Spleen (tissue), 13 donors: ENCODE measurements at regions of chr1 and their contacts with region 1.

Region 1: GRCh38 chr1:8015036-8015808 is 10.9 kb downstream of the ERRFI1 start:
- DNase-seq: no peak
- H3K4me3 ChIP-seq: no peak overlapping the region
- H3K27ac ChIP-seq: peak overlapping the region in 3 of 8 donors; percentile 9 to 11 (median 11)
- H3K4me1 ChIP-seq: peaks cover 3 to 31% (median 10%) of the 10 kb centered on the region in 6 donors
- H3K27me3 ChIP-seq: peaks cover 0 to 7% (median 0%) of the 10 kb centered on the region in 7 donors
- CTCF ChIP-seq: peak in 10 of 11 experiments; percentile 38 to 77 (median 60)
- POLR2A ChIP-seq: no peak

Region 2: DNA sequence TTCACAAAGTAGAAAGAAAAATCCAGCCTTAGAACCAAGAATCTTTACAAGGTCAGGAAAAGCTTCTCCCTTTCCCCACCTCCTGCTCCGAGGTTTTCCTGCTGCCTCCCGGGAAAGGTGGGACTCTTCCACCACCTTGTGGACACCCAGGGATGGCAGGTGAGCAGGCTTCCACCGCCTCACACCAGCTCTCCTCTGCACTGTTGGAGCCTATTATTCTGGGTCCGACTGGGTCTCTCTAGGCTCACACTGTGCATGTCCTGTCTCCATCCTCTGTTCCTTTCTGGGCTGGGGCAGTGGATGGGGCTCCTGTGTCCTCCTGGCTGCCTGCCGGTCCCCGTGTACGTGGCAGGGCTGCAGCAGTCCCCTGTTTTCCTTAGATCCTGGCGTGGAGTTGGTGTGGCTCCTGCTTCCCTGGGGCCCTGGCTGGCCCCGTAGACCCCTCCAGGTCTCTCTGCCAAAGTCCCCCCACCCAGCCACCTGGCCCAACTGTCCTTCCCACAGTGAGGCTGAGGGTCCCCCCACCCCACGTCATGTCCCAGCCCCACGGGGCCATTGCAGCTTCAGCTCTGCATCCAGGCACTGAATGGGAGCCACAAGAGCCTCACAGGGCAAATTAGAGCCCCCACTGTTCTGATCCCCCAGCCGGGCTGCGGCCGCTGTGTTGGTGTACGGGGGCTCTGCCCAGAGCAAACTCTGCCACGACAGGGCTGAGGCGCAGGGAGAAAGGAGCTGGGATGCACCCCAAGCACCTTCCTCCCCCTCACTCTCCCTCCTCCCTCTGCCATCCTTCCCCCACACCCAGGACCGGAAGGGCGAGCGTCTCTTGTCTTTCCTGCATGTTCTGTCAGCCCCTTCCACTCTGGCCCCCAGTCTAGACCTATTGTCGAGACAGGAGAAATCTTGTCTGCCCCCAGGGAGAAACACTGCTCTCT is 299.4 kb after region 1 on chr1:
- intact Hi-C with region 1: loop called (anchors 10 kb)
- DNase-seq: peak; percentile 82
- H3K4me3 ChIP-seq: no peak overlapping the region
- H3K27ac ChIP-seq: no peak overlapping the region
- H3K4me1 ChIP-seq: peaks cover 7 to 45% (median 27%) of the 10 kb centered on the region in 6 donors
- H3K27me3 ChIP-seq: peaks cover 0 to 64% (median 24%) of the 10 kb centered on the region in 7 donors
- CTCF ChIP-seq: peak; percentile 59 to 88 (median 77)
- POLR2A ChIP-seq: no peak

Region 3: DNA sequence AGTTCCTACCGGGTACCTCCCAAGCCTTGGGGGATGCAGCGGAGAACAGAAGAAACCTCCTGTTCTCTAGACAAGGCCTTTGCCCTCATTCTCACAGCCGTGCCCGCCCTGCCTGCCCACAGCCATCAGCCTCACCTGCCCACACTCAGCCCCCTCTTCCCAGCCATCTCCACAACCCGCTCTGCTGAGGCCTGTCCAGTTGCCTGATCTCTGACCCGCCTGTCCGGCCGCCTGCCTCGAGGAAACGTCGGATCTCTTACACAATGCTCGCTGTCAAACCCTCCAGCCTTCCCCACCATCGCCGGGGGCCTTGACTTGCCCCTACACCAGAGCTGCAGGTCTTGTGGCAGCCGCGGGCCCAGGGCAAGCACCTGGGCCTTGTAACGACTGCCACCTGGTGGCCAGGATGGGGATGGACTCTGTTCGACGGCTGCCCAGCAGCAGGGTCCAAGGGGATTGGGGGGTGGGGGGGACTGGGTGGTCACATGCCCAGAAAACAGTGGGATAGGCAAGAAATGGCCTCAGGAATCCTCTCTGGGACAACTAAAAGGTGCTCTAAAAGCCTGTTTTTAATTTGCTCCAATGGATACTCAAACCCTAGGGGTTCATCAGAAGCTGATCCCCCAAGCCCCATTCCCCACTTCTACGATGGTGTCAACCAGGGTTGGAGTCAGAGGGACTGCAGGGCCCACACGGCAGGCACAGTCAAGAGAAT is 333.7 kb after region 1 on chr1:
- intact Hi-C with region 1: loop called (anchors 10 kb)
- DNase-seq: peak; percentile 91
- H3K4me3 ChIP-seq: no peak overlapping the region
- H3K27ac ChIP-seq: no peak overlapping the region
- H3K4me1 ChIP-seq: peaks cover 8 to 59% (median 29%) of the 10 kb centered on the region in 6 donors
- H3K27me3 ChIP-seq: no peaks in the 10 kb centered on the region
- CTCF ChIP-seq: peak; percentile 72 to 92 (median 82)
- POLR2A ChIP-seq: no peak